ENCODE measurements at regions of chr5 and their contacts with region 1.

Region 1: DNA sequence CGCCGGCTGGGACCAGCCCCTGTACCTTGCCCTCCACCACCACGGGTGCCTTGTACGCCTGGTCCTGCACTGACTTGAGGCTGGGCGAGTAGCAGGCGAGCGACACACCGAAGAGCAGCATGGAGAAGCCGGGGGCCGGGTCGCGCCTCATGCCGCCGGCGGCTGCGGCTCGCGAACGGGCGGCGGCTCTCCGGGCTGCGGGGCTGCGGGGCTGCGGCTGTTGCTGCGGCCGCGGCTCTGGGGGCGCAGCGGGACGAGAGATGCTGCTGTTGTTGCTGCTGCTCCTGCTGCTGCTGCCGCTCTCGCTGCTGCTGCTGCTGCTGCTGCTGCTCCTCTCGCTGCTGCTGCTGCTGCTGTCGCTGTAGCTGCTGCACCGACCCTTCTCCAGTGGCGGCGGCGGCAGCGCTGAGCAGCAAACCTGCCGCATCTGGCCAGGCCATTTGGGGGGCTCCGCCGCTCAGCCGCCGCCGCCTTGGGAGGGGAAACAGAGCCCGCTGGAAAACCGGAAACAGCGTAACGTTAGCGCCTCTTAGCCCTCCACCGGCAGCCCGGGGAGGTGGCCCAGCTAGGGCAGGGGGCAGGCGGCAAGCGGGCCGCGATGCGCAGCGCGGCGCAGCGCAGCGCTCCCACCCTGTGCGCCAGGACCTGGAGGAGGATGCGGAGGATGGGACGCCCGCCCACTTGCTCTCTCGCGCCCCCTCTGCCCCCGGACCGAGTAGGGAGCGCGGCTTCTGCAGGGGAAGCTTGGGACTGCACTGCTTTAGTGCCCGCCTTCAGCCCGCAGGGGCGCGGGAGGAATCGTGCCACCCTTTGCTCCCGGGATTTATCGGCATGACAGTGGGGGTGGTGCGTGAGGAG is at the start of gene NRG2:
- DNase-seq: peak; percentile 80
- total RNA-seq, gene NRG2: 5.1 TPM

Region 2: DNA sequence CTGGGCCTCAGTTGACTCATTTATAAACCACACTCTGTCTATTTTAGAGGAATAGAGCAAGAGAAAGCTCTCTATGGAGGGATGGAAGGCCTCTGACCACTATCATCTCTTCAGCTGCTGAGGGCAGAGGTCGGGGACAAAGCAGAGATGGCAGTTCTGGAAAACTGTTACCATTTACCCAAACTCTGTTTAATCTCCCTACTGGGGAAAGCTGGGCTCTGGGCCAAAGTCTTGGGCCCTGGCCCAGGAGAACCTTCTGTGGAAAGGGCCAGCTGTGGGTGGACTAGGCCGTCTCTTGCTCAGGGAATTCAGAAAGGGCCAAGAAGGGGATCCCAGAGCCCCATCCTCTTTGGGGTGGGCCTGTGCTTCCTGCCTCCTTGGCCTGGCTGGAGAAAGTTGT is 147.2 kb before region 1 on chr5:
- intact Hi-C with region 1: loop called (anchors 5 kb)
- DNase-seq: peak; percentile 44

Region 3: GRCh38 chr5:139985733-139986132 is 57.1 kb before region 1 on chr5:
- intact Hi-C with region 1: loop called (anchors 5 kb)
- DNase-seq: no peak

Region 4: DNA sequence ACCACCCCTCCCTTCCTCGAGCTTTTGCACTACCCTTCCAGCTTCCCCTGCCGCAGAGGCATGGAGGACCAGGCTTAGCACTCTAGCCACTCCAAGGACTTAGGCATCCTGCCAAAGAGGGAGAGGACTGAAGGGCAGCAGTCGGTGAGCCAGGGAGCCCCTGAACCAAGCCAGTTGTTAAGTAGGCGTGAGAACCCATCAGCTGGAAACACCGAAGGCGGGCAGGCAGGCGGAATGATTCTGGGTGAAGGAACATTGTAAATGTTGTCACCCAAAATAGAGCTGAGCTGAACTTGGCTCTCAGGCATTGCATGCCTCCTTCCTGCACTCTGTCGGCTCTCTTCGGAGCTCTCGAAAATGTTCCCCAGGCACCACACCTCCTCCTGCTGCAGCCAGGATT is 42.5 kb before region 1 on chr5:
- intact Hi-C with region 1: loop called (anchors 5 kb)
- DNase-seq: no peak